PC-3 (cell line): ENCODE measurements at regions of chr6 and their contacts with region 1.

Region 1: GRCh38 chr6:166786704-166787293 is 159.7 kb upstream of the RPS6KA2 start:
- DNase-seq: peak; percentile 73
- ATAC-seq: peak; percentile 38; the same call in 1 of the 2 replicates
- H3K4me3 ChIP-seq: no peak overlapping the region
- H3K27ac ChIP-seq: no peak overlapping the region
- H3K4me1 ChIP-seq: no peaks in the 10 kb centered on the region
- H3K27me3 ChIP-seq: no peaks in the 10 kb centered on the region
- CTCF ChIP-seq: peak; percentile 81

Region 2: DNA sequence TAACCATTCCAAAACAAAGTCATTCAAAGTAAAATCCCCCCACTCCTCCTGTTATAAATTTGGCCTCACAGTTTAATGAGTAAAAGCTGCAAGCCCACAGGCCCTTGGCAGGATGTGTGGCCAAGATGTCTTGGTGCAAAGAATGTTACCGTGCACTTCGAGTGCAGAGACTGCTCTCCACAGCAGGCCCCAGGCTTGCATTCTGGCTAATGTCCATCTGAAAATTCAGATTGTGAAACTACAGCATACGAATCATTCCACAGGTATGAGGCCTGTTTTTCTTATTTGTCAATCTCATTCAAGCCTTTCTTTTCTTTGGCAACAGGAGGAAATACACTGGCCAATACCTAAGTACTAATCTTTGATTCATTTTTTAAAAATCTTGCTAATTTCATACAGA is 166.9 kb before region 1 on chr6:
- CTCF ChIA-PET with region 1: no interaction called
- POLR2A ChIA-PET with region 1: no interaction called
- intact Hi-C with region 1: no loop called
- DNase-seq: peak; percentile 88
- ATAC-seq: peak; percentile 38
- H3K4me3 ChIP-seq: no peak overlapping the region
- H3K27ac ChIP-seq: peak overlapping the region; percentile 35
- H3K4me1 ChIP-seq: peaks cover 34% of the 10 kb centered on the region
- H3K27me3 ChIP-seq: no peaks in the 10 kb centered on the region
- CTCF ChIP-seq: no peak

Region 3: GRCh38 chr6:166989427-166990032 is 202.7 kb after region 1 on chr6:
- CTCF ChIA-PET with region 1: no interaction called
- POLR2A ChIA-PET with region 1: no interaction called
- intact Hi-C with region 1: loop called (anchors 1 kb)
- DNase-seq: peak; percentile 46
- ATAC-seq: peak; percentile 24; the same call in 1 of the 2 replicates
- H3K4me3 ChIP-seq: no peak overlapping the region
- H3K27ac ChIP-seq: no peak overlapping the region
- H3K4me1 ChIP-seq: no peaks in the 10 kb centered on the region
- H3K27me3 ChIP-seq: no peaks in the 10 kb centered on the region
- CTCF ChIP-seq: peak; percentile 55; the same call in 1 of the 2 replicates

Region 4: GRCh38 chr6:167141667-167142432 is 355.1 kb after region 1 on chr6:
- CTCF ChIA-PET with region 1: no interaction called
- POLR2A ChIA-PET with region 1: no interaction called
- intact Hi-C with region 1: loop called (anchors 5 kb)
- DNase-seq: peak; percentile 41
- ATAC-seq: peak; percentile 81
- H3K4me3 ChIP-seq: no peak overlapping the region
- H3K27ac ChIP-seq: no peak overlapping the region
- H3K4me1 ChIP-seq: no peaks in the 10 kb centered on the region
- H3K27me3 ChIP-seq: peaks cover 37% of the 10 kb centered on the region
- CTCF ChIP-seq: peak; percentile 65